PC-3 (cell line): ENCODE measurements at regions of chr4 and their contacts with region 1.

Region 1: GRCh38 chr4:337143-337931 is at the start of gene ZNF141:
- DNase-seq: peak; percentile 93
- ATAC-seq: peak; percentile 92
- H3K4me3 ChIP-seq: peak within 1 kb of the TSS; percentile 93
- H3K27ac ChIP-seq: peak within 1 kb of the TSS; percentile 35
- H3K4me1 ChIP-seq: 0 out of 2 replicates have a peak, but pooled peaks cover 3% of the 10 kb centered on the region
- H3K27me3 ChIP-seq: no peaks in the 10 kb centered on the region
- CTCF ChIP-seq: no peak
- total RNA-seq, gene ZNF141: 5.4 and 6.5 TPM in 2 replicates

Region 2: GRCh38 chr4:188076-188475 is 149.3 kb before region 1 on chr4:
- CTCF ChIA-PET with region 1: no interaction called
- POLR2A ChIA-PET with region 1: no interaction called
- intact Hi-C with region 1: no loop called
- DNase-seq: no peak
- ATAC-seq: no peak
- H3K4me3 ChIP-seq: no peak overlapping the region
- H3K27ac ChIP-seq: no peak overlapping the region
- H3K4me1 ChIP-seq: no peaks in the 10 kb centered on the region
- H3K27me3 ChIP-seq: no peaks in the 10 kb centered on the region
- CTCF ChIP-seq: no peak

Region 3: DNA sequence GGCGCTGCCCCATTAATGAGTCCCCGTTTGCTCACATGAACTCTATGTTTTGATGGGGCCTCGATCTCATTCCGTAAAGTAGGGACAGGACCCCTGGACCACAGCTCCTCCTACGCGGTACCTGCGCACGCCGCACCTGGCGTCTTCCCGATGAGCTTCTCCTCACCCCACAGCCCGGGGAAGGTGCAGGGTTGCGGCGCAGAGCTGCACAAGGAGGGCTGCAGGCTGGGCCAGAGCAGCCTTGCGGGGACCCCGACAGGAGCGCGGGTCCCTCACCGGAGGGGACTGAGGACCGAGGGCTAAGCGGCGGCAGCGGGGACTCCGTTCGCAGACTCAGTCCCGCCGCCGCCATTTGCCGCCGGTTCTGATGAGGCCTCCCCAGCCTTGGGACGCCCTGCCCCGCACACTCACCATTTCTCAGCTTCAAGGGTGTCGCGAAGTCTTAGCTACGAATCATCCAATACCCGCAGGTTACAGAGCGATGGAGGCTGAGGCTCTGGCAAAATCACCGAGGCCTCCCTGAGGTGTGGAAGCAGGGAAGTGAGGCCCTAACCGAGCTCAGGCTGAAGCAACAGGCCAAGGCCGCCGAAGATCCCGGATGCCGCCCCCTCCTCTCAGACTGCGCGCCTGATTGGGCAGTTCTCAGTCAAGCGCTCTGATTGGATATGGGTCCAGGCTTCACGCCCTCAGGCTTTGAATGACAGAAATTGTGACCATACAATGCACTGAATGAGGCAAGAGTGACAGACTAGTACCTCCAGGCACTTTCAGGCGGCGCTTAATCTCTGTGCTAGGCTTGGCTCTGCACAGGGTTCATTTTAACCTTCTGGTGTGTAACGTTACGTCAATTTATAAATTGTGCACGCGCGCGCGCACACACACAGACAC is 136.5 kb after region 1 on chr4:
- CTCF ChIA-PET with region 1: no interaction called
- POLR2A ChIA-PET with region 1: interaction called, 5 read pairs
- intact Hi-C with region 1: loop called (anchors 10 kb)
- DNase-seq: peak; percentile 97
- ATAC-seq: peak; percentile 99
- H3K4me3 ChIP-seq: peak overlapping the region; percentile 96
- H3K27ac ChIP-seq: peak overlapping the region; percentile 50
- H3K4me1 ChIP-seq: no peaks in the 10 kb centered on the region; the same call in 1 of the 2 replicates
- H3K27me3 ChIP-seq: no peaks in the 10 kb centered on the region
- CTCF ChIP-seq: no peak